ENCODE measurements at regions of chr14 and their contacts with region 1.

Region 1: GRCh38 chr14:54450535-54450934 is 9.4 kb upstream of the CNIH1 start:
- DNase-seq: peak; percentile 12
- H3K4me3 Mint-ChIP-seq: no peak overlapping the region
- H3K27ac Mint-ChIP-seq: peak overlapping the region; percentile 61
- H3K4me1 Mint-ChIP-seq: peaks cover 20% of the 10 kb centered on the region
- H3K27me3 Mint-ChIP-seq: no peaks in the 10 kb centered on the region
- CTCF ChIP-seq: no peak

Region 2: GRCh38 chr14:54396493-54397335 is 53.8 kb before region 1 on chr14 and contains the start of gene CDKN3:
- CTCF ChIA-PET with region 1: interaction called, 3 read pairs
- POLR2A ChIA-PET with region 1: interaction called, 11 read pairs
- intact Hi-C with region 1: no loop called
- DNase-seq: peak; percentile 100
- H3K4me3 Mint-ChIP-seq: peak within 1 kb of the TSS; percentile 85
- H3K27ac Mint-ChIP-seq: peak within 1 kb of the TSS; percentile 37
- H3K4me1 Mint-ChIP-seq: peaks cover 16% of the 10 kb centered on the region
- H3K27me3 Mint-ChIP-seq: no peaks in the 10 kb centered on the region
- CTCF ChIP-seq: peak; percentile 45
- total RNA-seq, gene CDKN3: 66.4 and 66.5 TPM in 2 replicates

Region 3: DNA sequence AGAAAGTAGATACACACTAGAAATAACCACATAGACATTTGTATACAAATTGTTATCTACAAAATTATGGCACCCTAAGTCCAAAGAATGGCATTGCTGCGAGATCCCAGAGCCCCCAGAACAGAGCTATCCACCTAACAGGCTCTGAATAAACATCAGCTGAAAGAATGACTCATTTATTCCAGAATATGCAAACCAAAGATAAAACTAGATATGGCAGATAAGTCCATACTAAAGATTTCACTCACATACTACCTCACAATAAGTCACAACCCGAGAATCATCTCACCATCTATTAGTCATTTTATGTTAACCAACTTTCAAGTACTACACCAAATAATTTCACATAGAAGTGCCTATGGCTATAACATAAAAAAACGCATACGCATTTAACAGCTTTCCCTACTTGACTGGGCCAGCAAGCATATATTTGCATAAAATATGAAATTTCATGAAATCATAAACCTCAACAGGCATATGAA is 15.0 kb before region 1 on chr14:
- CTCF ChIA-PET with region 1: interaction called, 9 read pairs
- POLR2A ChIA-PET with region 1: interaction called, 21 read pairs
- intact Hi-C with region 1: no loop called
- DNase-seq: peak; percentile 30
- H3K4me3 Mint-ChIP-seq: peak overlapping the region; percentile 54
- H3K27ac Mint-ChIP-seq: peak overlapping the region; percentile 85
- H3K4me1 Mint-ChIP-seq: peaks cover 43% of the 10 kb centered on the region
- H3K27me3 Mint-ChIP-seq: no peaks in the 10 kb centered on the region
- CTCF ChIP-seq: no peak

Region 4: DNA sequence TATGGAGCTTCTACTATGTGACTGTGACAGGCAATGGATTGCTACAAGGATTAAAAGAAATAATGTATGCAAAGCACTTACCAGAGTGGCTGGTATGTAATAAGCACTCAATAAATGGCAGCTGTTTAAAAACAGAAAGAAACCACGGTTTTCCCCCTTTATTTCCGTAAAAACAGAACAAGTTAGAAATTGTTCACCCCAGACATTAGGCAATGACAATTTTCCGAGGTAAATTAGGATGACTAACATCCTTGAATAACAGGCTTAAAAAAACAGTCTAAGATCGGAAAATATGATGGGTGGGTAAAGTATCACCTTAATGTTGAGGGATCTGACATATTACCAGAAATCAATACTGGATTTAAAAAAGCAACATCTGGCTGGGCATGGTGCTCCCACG is 11.5 kb after region 1 on chr14:
- CTCF ChIA-PET with region 1: interaction called, 5 read pairs
- POLR2A ChIA-PET with region 1: interaction called, 20 read pairs
- intact Hi-C with region 1: no loop called
- DNase-seq: peak; percentile 39
- H3K4me3 Mint-ChIP-seq: no peak overlapping the region
- H3K27ac Mint-ChIP-seq: no peak overlapping the region
- H3K4me1 Mint-ChIP-seq: no peaks in the 10 kb centered on the region
- H3K27me3 Mint-ChIP-seq: no peaks in the 10 kb centered on the region
- CTCF ChIP-seq: no peak

Region 5: GRCh38 chr14:54483073-54483745 is 32.7 kb after region 1 on chr14:
- CTCF ChIA-PET with region 1: interaction called, 6 read pairs
- POLR2A ChIA-PET with region 1: interaction called, 100 read pairs
- intact Hi-C with region 1: no loop called
- DNase-seq: no peak
- H3K4me3 Mint-ChIP-seq: no peak overlapping the region
- H3K27ac Mint-ChIP-seq: no peak overlapping the region
- H3K4me1 Mint-ChIP-seq: peaks cover 39% of the 10 kb centered on the region
- H3K27me3 Mint-ChIP-seq: no peaks in the 10 kb centered on the region
- CTCF ChIP-seq: no peak

Region 6: GRCh38 chr14:54488646-54489317 is 38.2 kb after region 1 on chr14 and contains the start of gene GMFB:
- CTCF ChIA-PET with region 1: interaction called, 8 read pairs
- POLR2A ChIA-PET with region 1: interaction called, 100 read pairs
- intact Hi-C with region 1: no loop called
- DNase-seq: peak; percentile 93
- H3K4me3 Mint-ChIP-seq: peak within 1 kb of the TSS; percentile 73
- H3K27ac Mint-ChIP-seq: peak within 1 kb of the TSS; percentile 78
- H3K4me1 Mint-ChIP-seq: peaks cover 30% of the 10 kb centered on the region
- H3K27me3 Mint-ChIP-seq: no peaks in the 10 kb centered on the region
- CTCF ChIP-seq: peak; percentile 22
- total RNA-seq, gene GMFB: 53.3 and 65.0 TPM in 2 replicates

Region 7: GRCh38 chr14:54509546-54510501 is 59.3 kb after region 1 on chr14 and contains the start of gene CGRRF1:
- CTCF ChIA-PET with region 1: no interaction called
- POLR2A ChIA-PET with region 1: interaction called, 19 read pairs
- intact Hi-C with region 1: no loop called
- DNase-seq: peak; percentile 97
- H3K4me3 Mint-ChIP-seq: peak within 1 kb of the TSS; percentile 96
- H3K27ac Mint-ChIP-seq: peak within 1 kb of the TSS; percentile 86
- H3K4me1 Mint-ChIP-seq: peaks cover 20% of the 10 kb centered on the region
- H3K27me3 Mint-ChIP-seq: no peaks in the 10 kb centered on the region
- CTCF ChIP-seq: peak; percentile 30
- total RNA-seq, gene CGRRF1: 17.5 and 22.3 TPM in 2 replicates

Region 8: GRCh38 chr14:54698966-54699530 is 248.5 kb after region 1 on chr14:
- CTCF ChIA-PET with region 1: no interaction called
- POLR2A ChIA-PET with region 1: no interaction called
- intact Hi-C with region 1: no loop called
- DNase-seq: no peak
- H3K4me3 Mint-ChIP-seq: no peak overlapping the region
- H3K27ac Mint-ChIP-seq: no peak overlapping the region
- H3K4me1 Mint-ChIP-seq: peaks cover 9% of the 10 kb centered on the region
- H3K27me3 Mint-ChIP-seq: no peaks in the 10 kb centered on the region
- CTCF ChIP-seq: no peak